CD4-positive, alpha-beta T cell (primary cell): ENCODE measurements at regions of chr19 and their contacts with region 1.

Region 1: DNA sequence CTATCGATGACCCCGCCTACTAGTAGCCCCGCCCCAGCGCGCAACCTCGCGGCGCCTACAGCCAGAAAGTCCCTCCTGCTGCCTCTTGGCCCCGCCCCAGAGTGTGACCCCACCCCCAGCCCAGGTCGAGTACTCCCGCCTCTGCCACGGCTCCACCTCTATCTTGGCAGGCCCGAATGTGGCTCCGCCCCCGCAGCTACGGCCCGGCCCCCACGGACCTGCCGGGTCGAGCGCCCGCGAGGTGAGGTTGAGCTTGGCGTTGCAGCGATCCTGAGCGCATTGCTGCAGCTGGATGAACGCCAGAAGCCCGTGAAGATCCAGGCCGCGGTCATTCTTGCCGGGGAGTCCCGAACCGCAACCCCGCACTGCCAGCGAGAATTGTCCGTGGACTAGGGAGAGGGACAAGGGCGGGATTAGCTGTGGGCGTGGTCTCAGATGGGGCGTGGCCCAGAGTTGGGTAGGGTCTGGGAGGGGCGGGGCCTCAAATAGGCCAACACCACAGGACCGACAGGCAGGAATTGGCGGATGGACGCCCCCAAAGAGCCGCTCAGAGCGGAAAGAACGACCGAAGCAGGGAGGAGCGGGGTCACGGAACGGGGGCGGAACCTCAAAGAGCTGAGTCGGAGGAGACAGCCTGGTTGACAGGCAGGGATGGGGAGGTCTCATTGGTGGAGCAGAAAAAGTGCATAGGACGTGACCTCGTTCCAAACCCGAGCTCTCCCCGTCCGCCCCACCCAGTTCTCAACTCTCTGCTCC is 1.8 kb downstream of the LYPD3 start:
- DNase-seq: peak; percentile 99 to 100 (median 100)
- ATAC-seq: peak; percentile 77
- H3K4me3 ChIP-seq: peak overlapping the region; percentile 88
- H3K4me3 Mint-ChIP-seq: peak overlapping the region; percentile 95
- H3K27ac ChIP-seq: peak overlapping the region; percentile 85 to 88
- H3K27ac Mint-ChIP-seq: peak overlapping the region; percentile 97
- H3K4me1 ChIP-seq: peaks cover 50% of the 10 kb centered on the region
- H3K4me1 Mint-ChIP-seq: peaks cover 67% of the 10 kb centered on the region
- H3K27me3 ChIP-seq: no peaks in the 10 kb centered on the region
- H3K27me3 Mint-ChIP-seq: no peaks in the 10 kb centered on the region
- CTCF ChIP-seq: no peak

Region 2: GRCh38 chr19:43407416-43408005 is 56.0 kb before region 1 on chr19:
- CTCF ChIA-PET with region 1: no interaction called
- POLR2A ChIA-PET with region 1: no interaction called
- intact Hi-C with region 1: no loop called
- DNase-seq: no peak
- ATAC-seq: no peak
- H3K4me3 ChIP-seq: no peak overlapping the region
- H3K4me3 Mint-ChIP-seq: no peak overlapping the region
- H3K27ac ChIP-seq: no peak overlapping the region
- H3K27ac Mint-ChIP-seq: no peak overlapping the region
- H3K4me1 ChIP-seq: no peaks in the 10 kb centered on the region
- H3K4me1 Mint-ChIP-seq: no peaks in the 10 kb centered on the region
- H3K27me3 ChIP-seq: peaks cover 0 to 2% of the 10 kb centered on the region in 2 experiments
- H3K27me3 Mint-ChIP-seq: peaks cover 4% of the 10 kb centered on the region
- CTCF ChIP-seq: no peak

Region 3: GRCh38 chr19:43430142-43430710 is 33.3 kb before region 1 on chr19:
- CTCF ChIA-PET with region 1: interaction called, 24 read pairs
- POLR2A ChIA-PET with region 1: interaction called, 9 read pairs
- intact Hi-C with region 1: no loop called
- DNase-seq: peak in 2 of 14 experiments; percentile 45 to 56
- ATAC-seq: peak; percentile 79
- H3K4me3 ChIP-seq: no peak overlapping the region
- H3K4me3 Mint-ChIP-seq: peak overlapping the region; percentile 16
- H3K27ac ChIP-seq: peak overlapping the region in 1 of 2 donors; percentile 53
- H3K27ac Mint-ChIP-seq: peak overlapping the region; percentile 89
- H3K4me1 ChIP-seq: peaks cover 17% of the 10 kb centered on the region
- H3K4me1 Mint-ChIP-seq: peaks cover 39% of the 10 kb centered on the region
- H3K27me3 ChIP-seq: no peaks in the 10 kb centered on the region
- H3K27me3 Mint-ChIP-seq: no peaks in the 10 kb centered on the region
- CTCF ChIP-seq: no peak

Region 4: GRCh38 chr19:43446746-43447489 is 16.6 kb before region 1 on chr19:
- CTCF ChIA-PET with region 1: interaction called, 30 read pairs
- POLR2A ChIA-PET with region 1: interaction called, 24 read pairs
- intact Hi-C with region 1: loop called in 1 of 2 experiments (anchors 2 kb)
- DNase-seq: peak; percentile 74 to 91 (median 79)
- ATAC-seq: peak; percentile 86
- H3K4me3 ChIP-seq: no peak overlapping the region
- H3K4me3 Mint-ChIP-seq: no peak overlapping the region
- H3K27ac ChIP-seq: no peak overlapping the region
- H3K27ac Mint-ChIP-seq: peak overlapping the region; percentile 81
- H3K4me1 ChIP-seq: peaks cover 19% of the 10 kb centered on the region
- H3K4me1 Mint-ChIP-seq: peaks cover 39% of the 10 kb centered on the region
- H3K27me3 ChIP-seq: no peaks in the 10 kb centered on the region
- H3K27me3 Mint-ChIP-seq: no peaks in the 10 kb centered on the region
- CTCF ChIP-seq: peak; percentile 97

Region 5: GRCh38 chr19:43481701-43482100 is 18.1 kb after region 1 on chr19:
- CTCF ChIA-PET with region 1: interaction called, 3 read pairs
- POLR2A ChIA-PET with region 1: interaction called, 54 read pairs
- intact Hi-C with region 1: no loop called
- DNase-seq: no peak
- ATAC-seq: no peak
- H3K4me3 ChIP-seq: no peak overlapping the region
- H3K4me3 Mint-ChIP-seq: no peak overlapping the region
- H3K27ac ChIP-seq: no peak overlapping the region
- H3K27ac Mint-ChIP-seq: peak overlapping the region; percentile 33
- H3K4me1 ChIP-seq: no peaks in the 10 kb centered on the region
- H3K4me1 Mint-ChIP-seq: no peaks in the 10 kb centered on the region
- H3K27me3 ChIP-seq: no peaks in the 10 kb centered on the region
- H3K27me3 Mint-ChIP-seq: no peaks in the 10 kb centered on the region
- CTCF ChIP-seq: no peak

Region 6: DNA sequence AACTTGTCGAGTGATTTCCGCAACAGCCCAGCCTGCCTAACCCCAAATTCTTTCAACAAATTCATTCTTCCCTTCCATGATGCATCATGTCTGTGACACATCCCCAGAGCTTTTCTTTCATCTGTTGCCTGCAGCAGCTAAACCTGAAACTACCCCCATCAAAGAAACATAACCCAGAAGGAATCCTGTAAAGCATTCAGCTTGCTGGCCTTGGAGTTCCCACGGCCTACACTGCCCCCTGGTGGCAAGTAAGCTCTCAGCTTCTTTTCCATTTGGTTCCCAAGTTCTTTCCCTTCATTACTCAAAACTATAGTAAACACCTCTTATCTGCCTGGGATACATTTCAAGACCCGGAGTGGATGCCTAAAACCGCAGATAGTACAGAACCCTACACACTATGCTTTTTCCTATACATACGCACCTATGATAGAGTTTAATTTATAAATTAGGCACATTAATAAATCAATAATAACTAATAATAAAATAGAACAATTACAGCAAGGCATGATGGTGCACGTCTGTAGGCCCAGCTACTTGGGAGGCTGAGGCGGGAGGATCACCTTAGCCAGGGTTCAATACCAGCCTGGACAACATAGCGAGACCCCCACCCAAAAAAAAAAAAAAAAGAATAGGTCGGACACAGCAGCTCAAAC is 56.0 kb after region 1 on chr19:
- CTCF ChIA-PET with region 1: interaction called, 12 read pairs
- POLR2A ChIA-PET with region 1: interaction called, 18 read pairs
- intact Hi-C with region 1: no loop called
- DNase-seq: peak; percentile 71 to 91 (median 78)
- ATAC-seq: peak; percentile 99
- H3K4me3 ChIP-seq: no peak overlapping the region
- H3K4me3 Mint-ChIP-seq: no peak overlapping the region
- H3K27ac ChIP-seq: no peak overlapping the region
- H3K27ac Mint-ChIP-seq: peak overlapping the region; percentile 25
- H3K4me1 ChIP-seq: peaks cover 10% of the 10 kb centered on the region
- H3K4me1 Mint-ChIP-seq: peaks cover 11% of the 10 kb centered on the region
- H3K27me3 ChIP-seq: no peaks in the 10 kb centered on the region
- H3K27me3 Mint-ChIP-seq: no peaks in the 10 kb centered on the region
- CTCF ChIP-seq: peak; percentile 92

Region 7: DNA sequence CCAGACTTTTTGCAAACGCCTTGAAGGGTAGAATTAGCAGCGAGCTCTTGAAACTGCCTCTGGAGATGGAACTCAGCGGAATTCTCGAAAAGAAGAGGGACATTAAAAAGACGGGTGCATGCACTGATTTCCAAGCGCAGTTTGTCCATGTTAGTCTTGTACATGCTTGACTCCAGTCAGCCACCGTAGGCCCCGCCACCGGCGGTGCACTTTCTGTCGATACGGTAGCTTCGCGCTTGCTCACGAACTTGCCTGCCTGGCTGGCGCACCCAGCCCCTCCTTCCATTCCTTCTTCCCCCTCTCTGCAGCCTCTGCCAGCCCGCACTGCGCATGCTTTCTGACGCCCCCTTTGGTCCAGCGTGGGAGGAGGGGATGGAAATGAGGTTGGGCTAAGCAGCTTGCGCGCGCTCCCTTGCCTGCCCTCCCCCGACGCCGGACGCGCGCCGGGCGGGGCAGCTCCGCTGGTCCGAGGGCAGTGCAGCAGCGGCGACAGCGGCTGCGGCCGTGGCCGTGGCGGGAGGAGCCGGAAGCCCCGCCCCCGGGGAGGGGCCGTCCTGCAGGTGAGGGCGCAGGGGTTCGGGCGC is 69.5 kb after region 1 on chr19 and contains the start of gene ZNF575:
- CTCF ChIA-PET with region 1: no interaction called
- POLR2A ChIA-PET with region 1: interaction called, 44 read pairs
- intact Hi-C with region 1: no loop called
- DNase-seq: peak; percentile 70 to 93 (median 81)
- ATAC-seq: peak; percentile 48
- H3K4me3 ChIP-seq: peak within 1 kb of the TSS; percentile 77
- H3K4me3 Mint-ChIP-seq: peak within 1 kb of the TSS; percentile 96
- H3K27ac ChIP-seq: peak within 1 kb of the TSS; percentile 53 to 61
- H3K27ac Mint-ChIP-seq: peak within 1 kb of the TSS; percentile 92
- H3K4me1 ChIP-seq: peaks cover 21% of the 10 kb centered on the region
- H3K4me1 Mint-ChIP-seq: peaks cover 21% of the 10 kb centered on the region
- H3K27me3 ChIP-seq: no peaks in the 10 kb centered on the region
- H3K27me3 Mint-ChIP-seq: no peaks in the 10 kb centered on the region
- CTCF ChIP-seq: peak; percentile 13
- total RNA-seq, gene ZNF575: 2.6 to 2.7 TPM

Region 8: DNA sequence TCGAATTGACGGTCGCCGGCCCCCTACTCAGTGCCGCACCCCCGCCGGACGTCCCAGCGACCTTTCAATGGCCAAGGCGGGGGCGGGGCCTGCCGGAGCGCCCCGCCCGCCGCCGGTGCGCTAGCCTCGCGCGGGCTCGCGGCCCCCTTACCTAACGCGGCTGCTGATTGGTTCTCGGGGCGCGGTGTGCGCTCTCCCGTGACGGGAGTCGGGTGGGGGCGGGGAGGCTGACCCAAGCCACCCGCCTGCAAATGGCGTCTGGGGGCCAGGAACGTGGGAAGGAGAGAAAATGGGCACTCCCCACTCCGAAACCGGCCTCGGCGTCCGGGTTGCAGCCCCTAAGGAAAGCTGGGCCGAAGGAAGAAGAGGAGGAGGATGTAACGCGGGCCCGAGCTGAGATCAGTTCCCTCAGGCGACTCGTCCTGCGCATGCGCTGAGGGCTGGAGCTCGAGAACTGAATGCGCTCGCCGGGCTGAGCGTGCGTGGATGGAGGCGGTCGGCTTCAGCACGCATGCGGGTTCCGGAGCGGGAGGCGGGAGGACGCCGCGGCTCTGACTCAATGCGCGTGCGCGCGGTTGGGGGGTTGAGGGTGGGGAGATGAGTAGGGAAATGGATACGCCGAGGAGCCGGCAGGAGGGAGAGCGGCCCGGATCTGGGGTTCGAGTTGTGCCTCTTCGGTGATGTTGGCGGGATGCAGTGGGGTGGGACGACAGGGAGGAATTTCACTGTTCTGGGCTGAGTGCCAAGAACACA is 291.1 kb after region 1 on chr19 and contains the start of gene SMG9:
- CTCF ChIA-PET with region 1: no interaction called
- POLR2A ChIA-PET with region 1: interaction called, 6 read pairs
- intact Hi-C with region 1: loop called in 1 of 2 experiments (anchors 10 kb)
- DNase-seq: peak; percentile 96 to 100 (median 98)
- ATAC-seq: peak; percentile 79
- H3K4me3 ChIP-seq: peak within 1 kb of the TSS; percentile 95
- H3K4me3 Mint-ChIP-seq: peak within 1 kb of the TSS; percentile 98
- H3K27ac ChIP-seq: peak within 1 kb of the TSS; percentile 97 to 99
- H3K27ac Mint-ChIP-seq: peak within 1 kb of the TSS; percentile 95
- H3K4me1 ChIP-seq: peaks cover 42% of the 10 kb centered on the region
- H3K4me1 Mint-ChIP-seq: peaks cover 43% of the 10 kb centered on the region
- H3K27me3 ChIP-seq: no peaks in the 10 kb centered on the region
- H3K27me3 Mint-ChIP-seq: no peaks in the 10 kb centered on the region
- CTCF ChIP-seq: no peak
- total RNA-seq, gene SMG9: 34.7 to 38.2 TPM

Region 9: GRCh38 chr19:44025217-44025936 is 561.8 kb after region 1 on chr19 and contains the start of gene ZNF222:
- CTCF ChIA-PET with region 1: no interaction called
- POLR2A ChIA-PET with region 1: no interaction called
- intact Hi-C with region 1: no loop called
- DNase-seq: peak; percentile 53 to 90 (median 70)
- ATAC-seq: peak; percentile 97
- H3K4me3 ChIP-seq: peak within 1 kb of the TSS; percentile 79
- H3K4me3 Mint-ChIP-seq: peak within 1 kb of the TSS; percentile 98
- H3K27ac ChIP-seq: no peak within 1 kb of the TSS
- H3K27ac Mint-ChIP-seq: peak within 1 kb of the TSS; percentile 88
- H3K4me1 ChIP-seq: peaks cover 14% of the 10 kb centered on the region
- H3K4me1 Mint-ChIP-seq: peaks cover 30% of the 10 kb centered on the region
- H3K27me3 ChIP-seq: no peaks in the 10 kb centered on the region
- H3K27me3 Mint-ChIP-seq: peaks cover 9% of the 10 kb centered on the region
- CTCF ChIP-seq: no peak
- total RNA-seq, gene ZNF222: 4.5 to 5.8 TPM